Activated T-helper 1 cell treated with anti-CD3 and anti-CD28 coated beads, Interleukin-12 subunit alpha, Interleukin-12 subunit beta, Interleukin-2, Interleukin-4 antibody, amounts not matched to agents 30 ng/mL and 10 ng/mL and 1 ng/mL, durations not matched to agents 14 hours and 24 hours and 36 hours (primary cell): ENCODE measurements at regions of chr18 and their contacts with region 1.

Region 1: DNA sequence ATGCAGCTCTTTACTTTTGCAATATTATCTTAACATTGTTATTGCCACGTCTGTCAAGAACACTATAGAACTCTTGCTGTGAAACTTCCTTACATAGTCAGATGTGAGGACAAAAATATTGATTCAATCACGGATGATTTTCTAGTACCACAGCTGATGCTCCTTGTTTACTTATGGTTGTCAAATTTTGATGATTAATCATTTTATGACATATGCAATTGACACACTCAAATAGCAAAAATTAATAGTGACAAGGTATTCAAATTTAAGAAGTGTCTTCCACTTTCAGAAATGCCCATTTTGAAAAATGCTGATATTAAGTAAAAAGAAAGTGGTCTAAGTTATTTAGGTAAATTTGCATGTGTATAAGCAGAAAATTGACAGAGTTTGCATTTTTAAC is 284.0 kb downstream of the CCDC102B start:
- DNase-seq: no peak
- H3K4me3 Mint-ChIP-seq: no peak overlapping the region
- H3K27ac Mint-ChIP-seq: no peak overlapping the region
- H3K4me1 Mint-ChIP-seq: no peaks in the 10 kb centered on the region
- H3K27me3 Mint-ChIP-seq: no peaks in the 10 kb centered on the region

Region 2: DNA sequence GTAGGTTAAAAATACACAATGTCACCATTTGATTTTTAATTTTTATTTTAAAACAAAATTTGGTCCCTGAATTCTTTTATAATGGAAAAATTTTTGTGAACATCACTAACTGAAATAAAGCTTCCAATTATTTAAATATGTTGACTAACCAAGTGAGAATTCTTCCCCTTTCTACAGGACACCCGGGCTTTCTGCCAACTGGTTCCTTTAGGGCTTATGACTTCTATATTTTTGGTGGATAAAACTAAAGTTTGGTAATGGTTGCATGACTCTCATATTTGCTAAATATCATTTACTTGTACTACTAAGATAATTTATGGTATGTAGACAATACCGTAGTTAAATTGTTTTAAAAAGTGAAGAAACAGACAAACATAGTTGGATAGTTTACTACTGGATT is 27.8 kb after region 1 on chr18:
- intact Hi-C with region 1: loop called (anchors 1 kb)
- DNase-seq: no peak
- H3K4me3 Mint-ChIP-seq: no peak overlapping the region
- H3K27ac Mint-ChIP-seq: no peak overlapping the region
- H3K4me1 Mint-ChIP-seq: no peaks in the 10 kb centered on the region
- H3K27me3 Mint-ChIP-seq: no peaks in the 10 kb centered on the region